ENCODE measurements at regions of chr10 and their contacts with region 1.

Region 1: GRCh38 chr10:62816331-62817120 is at the start of gene EGR2:
- DNase-seq: peak; percentile 100
- ATAC-seq: peak; percentile 76
- H3K4me3 ChIP-seq: peak within 1 kb of the TSS; percentile 69
- H3K27ac ChIP-seq: peak within 1 kb of the TSS; percentile 37
- H3K4me1 ChIP-seq: peaks cover 22% of the 10 kb centered on the region
- H3K27me3 ChIP-seq: no peaks in the 10 kb centered on the region
- CTCF ChIP-seq: no peak; the same call in 1 of the 2 replicates
- total RNA-seq, gene EGR2: 2.7 and 2.8 TPM in 2 replicates

Region 2: DNA sequence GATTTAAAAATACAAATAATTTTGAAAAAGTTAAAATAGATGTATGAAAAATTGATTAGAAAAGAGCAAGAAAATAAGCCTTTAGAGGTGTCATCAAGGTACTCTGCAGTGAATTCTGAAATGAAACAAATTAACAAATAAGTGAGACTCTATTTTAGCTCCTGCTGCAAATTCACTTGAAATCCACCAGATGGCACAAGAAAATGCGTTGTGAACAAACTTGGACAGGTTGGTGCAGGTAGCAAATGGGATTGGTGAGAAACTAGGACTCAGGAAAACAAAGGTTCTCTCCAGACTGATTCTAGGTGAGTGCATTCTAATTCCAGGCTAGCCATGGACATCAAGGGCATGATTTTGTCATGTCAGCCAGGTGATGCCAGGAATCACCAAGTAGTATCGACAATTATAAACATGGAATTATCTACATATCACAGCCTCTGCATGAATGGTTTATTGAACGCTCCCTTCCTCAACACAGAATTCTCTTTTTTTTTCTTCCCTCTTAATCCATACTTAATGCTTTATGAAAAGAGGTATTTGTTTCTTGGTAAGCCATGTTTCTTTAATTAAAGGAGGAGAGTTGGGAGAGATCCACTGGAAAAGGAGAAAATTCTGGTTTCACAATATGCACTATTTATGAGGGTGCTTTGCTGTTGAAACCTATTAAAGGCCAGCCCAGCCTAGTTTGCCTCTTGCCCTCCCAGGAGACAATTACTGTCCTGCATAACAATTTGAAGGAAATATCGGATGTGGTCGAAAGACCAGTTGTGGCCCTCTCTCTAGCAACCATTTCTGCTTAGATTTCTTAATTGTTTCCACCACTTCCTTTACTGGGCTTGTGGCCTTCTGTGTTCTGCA is 324.3 kb before region 1 on chr10:
- CTCF ChIA-PET with region 1: interaction called, 10 read pairs
- POLR2A ChIA-PET with region 1: interaction called, 4 read pairs
- intact Hi-C with region 1: loop called (anchors 2 kb)
- DNase-seq: peak; percentile 92
- ATAC-seq: peak; percentile 90
- H3K4me3 ChIP-seq: no peak overlapping the region
- H3K27ac ChIP-seq: no peak overlapping the region
- H3K4me1 ChIP-seq: no peaks in the 10 kb centered on the region
- H3K27me3 ChIP-seq: peaks cover 7% of the 10 kb centered on the region; the same call in 1 of the 2 replicates
- CTCF ChIP-seq: peak; percentile 100

Region 3: GRCh38 chr10:62625484-62625883 is 191.0 kb before region 1 on chr10:
- CTCF ChIA-PET with region 1: interaction called, 11 read pairs
- POLR2A ChIA-PET with region 1: no interaction called
- intact Hi-C with region 1: loop called (anchors 1 kb)
- DNase-seq: peak; percentile 93
- ATAC-seq: peak; percentile 82
- H3K4me3 ChIP-seq: peak overlapping the region; percentile 5; the same call in 1 of the 2 replicates
- H3K27ac ChIP-seq: peak overlapping the region; percentile 73
- H3K4me1 ChIP-seq: peaks cover 44% of the 10 kb centered on the region
- H3K27me3 ChIP-seq: no peaks in the 10 kb centered on the region
- CTCF ChIP-seq: no peak

Region 4: GRCh38 chr10:62794306-62794705 is 22.2 kb before region 1 on chr10:
- CTCF ChIA-PET with region 1: interaction called, 6 read pairs
- POLR2A ChIA-PET with region 1: no interaction called
- intact Hi-C with region 1: loop called (anchors 1 kb)
- DNase-seq: peak; percentile 96
- ATAC-seq: peak; percentile 97
- H3K4me3 ChIP-seq: peak overlapping the region; percentile 0; the same call in 1 of the 2 replicates
- H3K27ac ChIP-seq: peak overlapping the region; percentile 2
- H3K4me1 ChIP-seq: peaks cover 14% of the 10 kb centered on the region
- H3K27me3 ChIP-seq: no peaks in the 10 kb centered on the region
- CTCF ChIP-seq: no peak

Region 5: GRCh38 chr10:63003816-63004453 is 187.4 kb after region 1 on chr10:
- CTCF ChIA-PET with region 1: interaction called, 9 read pairs
- POLR2A ChIA-PET with region 1: no interaction called
- intact Hi-C with region 1: loop called (anchors 1 kb)
- DNase-seq: peak; percentile 87
- ATAC-seq: peak; percentile 39
- H3K4me3 ChIP-seq: no peak overlapping the region
- H3K27ac ChIP-seq: no peak overlapping the region
- H3K4me1 ChIP-seq: peaks cover 16% of the 10 kb centered on the region
- H3K27me3 ChIP-seq: no peaks in the 10 kb centered on the region
- CTCF ChIP-seq: peak; percentile 99

Region 6: DNA sequence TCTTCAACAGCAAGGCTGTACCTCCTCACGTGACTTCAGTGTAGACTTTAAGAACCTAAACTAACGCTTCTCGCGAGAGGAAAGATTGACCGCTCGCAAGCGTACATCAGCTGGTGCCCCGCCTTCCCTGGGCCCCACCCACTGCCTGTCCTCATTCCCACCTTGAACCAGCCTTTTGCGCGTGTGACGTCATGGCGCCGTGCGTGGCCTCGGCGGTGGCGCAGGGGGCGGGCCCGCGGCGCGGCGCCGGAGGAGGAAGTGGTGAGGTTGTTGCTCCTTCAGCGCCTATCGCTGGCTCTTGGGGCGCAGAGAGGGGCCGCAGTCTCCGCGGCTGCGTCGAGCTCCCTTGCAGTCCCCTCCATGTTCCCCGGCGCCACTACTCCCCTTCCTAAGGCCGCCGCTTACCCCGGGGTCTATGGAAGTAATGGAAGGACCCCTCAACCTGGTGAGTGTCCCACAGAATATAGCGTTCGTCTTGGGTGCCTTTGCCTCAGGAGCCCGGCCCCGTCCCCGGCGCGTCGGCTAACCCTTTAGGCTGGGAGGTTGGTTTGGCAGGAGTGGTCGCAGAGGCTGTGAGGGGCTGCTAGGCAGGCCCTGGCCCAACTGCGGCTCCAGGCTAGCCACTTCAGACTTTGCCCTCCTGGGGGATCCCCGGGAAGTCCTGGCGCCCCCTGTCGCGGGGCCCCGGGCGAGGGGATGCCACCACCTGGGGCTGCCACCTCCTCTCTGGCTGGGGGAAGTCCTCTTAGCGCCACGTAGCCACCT is 316.7 kb after region 1 on chr10 and contains the start of gene NRBF2:
- CTCF ChIA-PET with region 1: no interaction called
- POLR2A ChIA-PET with region 1: no interaction called
- intact Hi-C with region 1: loop called (anchors 2 kb)
- DNase-seq: peak; percentile 100
- ATAC-seq: peak; percentile 95
- H3K4me3 ChIP-seq: peak within 1 kb of the TSS; percentile 75
- H3K27ac ChIP-seq: peak within 1 kb of the TSS; percentile 33
- H3K4me1 ChIP-seq: peaks cover 26% of the 10 kb centered on the region
- H3K27me3 ChIP-seq: no peaks in the 10 kb centered on the region
- CTCF ChIP-seq: peak; percentile 86
- total RNA-seq, gene NRBF2: 43.4 and 44.4 TPM in 2 replicates

Measured in PC-3 (cell line).